ENCODE measurements at regions of chr9 and their contacts with region 1.

Region 1: DNA sequence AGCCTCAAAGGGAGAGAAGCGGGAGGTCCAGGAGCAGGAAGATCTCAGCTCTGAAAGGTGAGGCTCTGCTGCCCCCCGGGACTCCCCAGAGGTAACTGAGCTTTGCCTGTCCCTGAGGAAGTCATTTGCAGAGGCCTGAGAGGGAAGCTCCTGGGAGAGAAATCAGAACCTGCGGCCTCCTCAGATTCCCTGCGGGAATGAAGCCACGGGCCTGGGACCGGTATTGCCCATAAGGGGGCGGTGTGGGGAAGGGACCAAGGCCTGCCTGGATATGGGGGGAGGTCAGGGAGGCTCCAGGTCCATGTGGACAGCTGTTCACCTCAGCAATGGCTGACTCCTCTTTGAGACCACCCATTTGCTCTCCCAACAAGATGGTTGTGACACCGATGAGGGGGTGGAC is 1.3 kb downstream of the SPATA31E1 start:
- DNase-seq: peak; percentile 75
- ATAC-seq: peak; percentile 75
- H3K4me3 Mint-ChIP-seq: no peak overlapping the region
- H3K27ac Mint-ChIP-seq: no peak overlapping the region
- H3K4me1 Mint-ChIP-seq: peaks cover 26% of the 10 kb centered on the region
- H3K27me3 Mint-ChIP-seq: peaks cover 4% of the 10 kb centered on the region; the same call in 1 of the 2 replicates
- CTCF ChIP-seq: 0 out of 2 replicates have a peak, but pooled peaks have one; percentile 25

Region 2: GRCh38 chr9:87834357-87834756 is 49.6 kb before region 1 on chr9:
- CTCF ChIA-PET with region 1: interaction called, 24 read pairs
- POLR2A ChIA-PET with region 1: no interaction called
- DNase-seq: peak; percentile 86
- ATAC-seq: peak; percentile 96
- H3K4me3 Mint-ChIP-seq: no peak overlapping the region
- H3K27ac Mint-ChIP-seq: no peak overlapping the region
- H3K4me1 Mint-ChIP-seq: peaks cover 16% of the 10 kb centered on the region
- H3K27me3 Mint-ChIP-seq: peaks cover 7% of the 10 kb centered on the region
- CTCF ChIP-seq: no peak; the same call in 1 of the 2 replicates

Region 3: GRCh38 chr9:87872079-87872624 is 11.8 kb before region 1 on chr9:
- CTCF ChIA-PET with region 1: interaction called, 16 read pairs
- POLR2A ChIA-PET with region 1: interaction called, 3 read pairs
- DNase-seq: no peak
- ATAC-seq: no peak
- H3K4me3 Mint-ChIP-seq: no peak overlapping the region
- H3K27ac Mint-ChIP-seq: no peak overlapping the region
- H3K4me1 Mint-ChIP-seq: peaks cover 28% of the 10 kb centered on the region
- H3K27me3 Mint-ChIP-seq: no peaks in the 10 kb centered on the region; the same call in 1 of the 2 replicates
- CTCF ChIP-seq: no peak

Region 4: DNA sequence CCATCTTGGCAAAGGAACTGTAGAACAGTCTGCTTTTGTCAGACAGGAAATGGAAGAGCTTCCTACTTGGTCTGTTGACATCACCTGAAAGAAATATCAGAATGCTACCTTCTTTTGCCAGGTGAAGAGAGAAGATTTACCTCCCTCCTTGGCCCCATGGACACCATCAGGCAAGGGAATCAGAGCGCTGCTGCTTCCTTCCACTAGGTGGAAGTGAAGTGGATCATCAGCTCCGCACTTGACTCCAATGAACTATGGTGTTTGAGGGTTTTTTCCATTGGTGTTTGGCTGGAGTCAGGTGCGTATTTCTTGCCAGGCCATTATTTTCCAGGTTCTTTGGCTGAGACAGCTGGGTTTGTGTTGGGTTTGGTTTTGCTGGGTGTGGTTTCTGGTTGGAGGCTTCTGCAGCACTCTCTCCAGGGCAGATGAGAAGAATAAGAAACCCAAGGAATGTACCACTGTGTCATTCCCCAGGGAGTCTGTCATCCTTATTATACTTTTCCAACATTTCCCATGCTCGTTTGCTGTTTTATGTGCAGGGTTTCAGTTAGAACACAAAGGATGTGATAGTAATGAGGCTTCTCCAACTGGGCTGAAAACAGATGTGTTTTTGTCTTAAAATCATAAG is 11.1 kb after region 1 on chr9:
- CTCF ChIA-PET with region 1: interaction called, 26 read pairs
- POLR2A ChIA-PET with region 1: no interaction called
- DNase-seq: no peak
- ATAC-seq: peak; percentile 84
- H3K4me3 Mint-ChIP-seq: no peak overlapping the region
- H3K27ac Mint-ChIP-seq: no peak overlapping the region
- H3K4me1 Mint-ChIP-seq: no peaks in the 10 kb centered on the region
- H3K27me3 Mint-ChIP-seq: no peaks in the 10 kb centered on the region; the same call in 1 of the 2 replicates
- CTCF ChIP-seq: no peak